Right lobe of liver (tissue), 6 donors: ENCODE measurements at regions of chr1 and their contacts with region 1.

Region 1: DNA sequence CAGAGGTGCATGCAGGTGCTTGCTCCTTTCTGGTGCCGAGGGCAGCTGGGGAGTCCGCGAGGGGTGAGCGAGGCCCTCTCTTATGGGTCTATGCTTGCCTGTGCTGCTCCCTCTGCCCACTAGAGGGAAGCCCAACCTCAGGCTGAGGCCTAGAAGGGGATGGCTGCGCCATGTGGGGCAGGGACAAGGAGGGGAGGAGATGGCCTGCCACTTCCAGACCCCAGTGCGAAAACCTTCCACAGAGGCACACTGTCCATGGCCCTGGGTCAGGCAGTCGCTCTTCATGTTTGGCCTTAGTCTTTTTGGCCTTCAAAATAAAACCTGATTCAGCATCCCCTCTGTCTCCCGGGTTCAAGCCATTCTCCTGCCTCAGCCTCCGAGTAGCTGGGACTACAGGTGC is 14.0 kb downstream of the RHBG start:
- DNase-seq: peak; percentile 63 to 69 (median 66)
- ATAC-seq: peak; percentile 86 to 92 (median 88)
- H3K4me3 ChIP-seq: no peak overlapping the region
- H3K27ac ChIP-seq: no peak overlapping the region
- H3K4me1 ChIP-seq: no peaks in the 10 kb centered on the region
- H3K27me3 ChIP-seq: no peaks in the 10 kb centered on the region
- CTCF ChIP-seq: peak; percentile 67 to 82 (median 78)
- POLR2A ChIP-seq: no peak

Region 2: DNA sequence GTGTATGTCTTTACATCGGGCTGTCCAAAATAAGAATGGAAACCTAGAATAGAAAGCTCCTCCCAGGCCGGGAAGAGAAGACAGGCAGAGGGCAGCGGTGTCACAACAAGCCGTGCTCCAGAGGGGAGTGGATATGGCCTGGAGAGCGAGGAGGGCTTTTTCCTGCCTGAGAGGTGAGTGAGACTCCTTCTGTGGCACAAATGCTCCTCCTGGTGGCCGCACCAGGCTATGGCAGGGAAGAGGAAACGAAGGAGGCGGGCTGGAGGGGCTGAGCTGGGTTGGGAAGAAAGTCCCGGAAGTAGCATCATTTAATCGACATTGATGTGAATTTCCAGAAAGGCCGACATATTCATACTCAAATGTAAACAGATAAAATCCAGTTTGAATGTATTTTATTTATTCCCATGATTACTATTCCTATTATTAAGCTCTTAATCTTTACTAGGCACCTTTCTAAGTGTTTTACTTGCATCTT is 62.8 kb after region 1 on chr1:
- intact Hi-C with region 1: loop called (anchors 5 kb)
- DNase-seq: peak; percentile 79 to 82 (median 81)
- ATAC-seq: peak; percentile 98 to 99 (median 98)
- H3K4me3 ChIP-seq: no peak overlapping the region
- H3K27ac ChIP-seq: no peak overlapping the region
- H3K4me1 ChIP-seq: peaks cover 0 to 1% (median 0%) of the 10 kb centered on the region in 4 donors
- H3K27me3 ChIP-seq: peaks cover 0 to 19% of the 10 kb centered on the region in 2 donors
- CTCF ChIP-seq: peak; percentile 91 to 97 (median 96)
- POLR2A ChIP-seq: no peak

Region 3: DNA sequence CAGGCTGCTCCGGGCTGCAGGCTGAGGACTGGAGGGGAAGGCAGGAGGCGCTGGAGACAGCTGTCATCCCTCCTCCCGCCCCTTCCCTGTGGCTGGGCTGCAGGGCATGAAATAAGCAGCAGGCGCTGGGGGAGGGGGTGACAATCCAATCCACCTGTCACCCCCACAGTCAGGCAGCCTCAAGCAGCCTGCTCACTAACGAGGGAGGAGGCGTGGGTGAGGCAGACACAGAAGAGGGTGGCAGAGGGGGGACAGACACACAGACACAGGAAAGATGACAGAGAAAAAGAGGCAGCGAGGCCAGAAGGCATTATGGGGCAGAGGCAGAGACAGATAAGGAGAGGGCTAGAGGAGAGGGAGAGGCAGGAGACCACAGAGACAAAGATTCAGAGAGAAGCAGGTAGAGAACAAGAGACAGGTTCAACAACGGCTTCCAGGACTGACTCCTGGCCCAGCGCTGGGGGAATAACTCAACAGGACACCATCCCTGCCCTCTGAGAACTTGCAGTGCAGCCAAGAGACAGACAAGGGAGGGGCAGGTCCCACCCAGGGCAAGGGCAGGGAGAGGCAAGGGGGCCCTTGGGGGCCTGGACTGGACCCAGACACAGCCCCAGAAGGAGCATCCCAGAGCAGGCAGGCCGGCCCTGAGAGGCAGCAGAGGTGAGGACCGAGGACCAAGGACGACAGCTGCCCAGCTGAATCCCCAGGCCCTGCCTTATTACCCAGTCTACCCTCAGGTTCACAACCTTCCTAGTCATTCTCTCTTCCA is 106.3 kb after region 1 on chr1:
- intact Hi-C with region 1: no loop called
- DNase-seq: no peak
- ATAC-seq: peak; percentile 3 to 12 (median 8)
- H3K4me3 ChIP-seq: no peak overlapping the region
- H3K27ac ChIP-seq: peak overlapping the region in 1 of 3 donors; percentile 18
- H3K4me1 ChIP-seq: peaks cover 0 to 44% (median 21%) of the 10 kb centered on the region in 4 donors
- H3K27me3 ChIP-seq: no peaks in the 10 kb centered on the region
- CTCF ChIP-seq: no peak
- POLR2A ChIP-seq: no peak

Region 4: GRCh38 chr1:156618853-156619581 is 236.0 kb after region 1 on chr1 and contains the start of gene HAPLN2:
- intact Hi-C with region 1: loop called in 1 of 2 experiments (anchors 10 kb)
- DNase-seq: no peak
- ATAC-seq: peak in 3 of 4 donors; percentile 33 to 48 (median 48)
- H3K4me3 ChIP-seq: no peak within 1 kb of the TSS
- H3K27ac ChIP-seq: no peak within 1 kb of the TSS
- H3K4me1 ChIP-seq: peaks cover 0 to 2% (median 0%) of the 10 kb centered on the region in 4 donors
- H3K27me3 ChIP-seq: peaks cover 5 to 10% of the 10 kb centered on the region in 2 donors
- CTCF ChIP-seq: peak in 3 of 4 donors; percentile 22 to 36 (median 31)
- POLR2A ChIP-seq: no peak
- total RNA-seq, gene HAPLN2: not detected